Heart left ventricle (tissue), 16 donors: ENCODE measurements at regions of chr6 and their contacts with region 1.

Region 1: GRCh38 chr6:163965426-163966348 is 551.2 kb downstream of the QKI start:
- DNase-seq: peak in 3 of 5 donors; percentile 59 to 74 (median 61)
- ATAC-seq: peak; percentile 47 to 66 (median 54)
- H3K4me3 ChIP-seq: no peak overlapping the region
- H3K27ac ChIP-seq: peak overlapping the region; percentile 77 to 98 (median 90)
- H3K4me1 ChIP-seq: peaks cover 0 to 50% (median 17%) of the 10 kb centered on the region in 12 donors
- H3K27me3 ChIP-seq: no peaks in the 10 kb centered on the region
- CTCF ChIP-seq: no peak
- POLR2A ChIP-seq: no peak

Region 2: DNA sequence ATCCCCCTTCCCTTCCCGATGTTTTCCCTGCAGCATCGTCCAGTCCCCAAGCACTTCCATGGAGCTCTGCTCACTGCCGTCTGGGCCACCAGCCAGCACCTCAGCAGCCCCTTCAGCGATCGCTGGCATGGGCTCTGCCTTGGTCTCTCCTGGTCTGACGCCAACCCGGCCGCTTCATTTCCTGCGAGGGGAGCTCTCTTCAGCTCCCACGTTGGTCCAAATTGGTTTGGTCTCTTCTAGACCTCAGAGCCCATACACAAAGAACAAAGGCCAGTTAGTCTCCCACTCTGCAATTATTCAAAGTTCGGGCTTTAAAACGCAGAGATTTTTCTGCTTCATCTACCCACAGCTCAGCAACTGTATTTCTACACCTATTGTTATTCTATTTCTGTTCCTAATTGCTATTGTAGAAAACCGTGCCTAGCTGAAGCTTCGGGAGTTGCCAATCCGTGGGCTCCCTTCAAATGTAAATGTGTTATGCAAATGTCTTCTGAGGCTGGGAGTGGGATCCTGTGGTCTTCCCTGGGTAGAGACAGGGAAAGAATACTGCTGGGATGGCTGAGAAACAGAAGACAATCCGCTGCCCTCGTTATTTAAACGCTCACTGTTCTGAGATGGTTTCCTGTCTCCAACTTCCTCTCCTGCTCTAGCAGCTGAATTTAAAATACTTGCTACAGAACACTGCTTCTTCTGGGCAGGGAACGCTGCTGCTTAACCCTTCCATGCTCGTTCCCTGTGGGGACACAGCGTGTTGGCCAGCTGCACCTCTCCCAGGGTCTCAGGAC is 705.4 kb before region 1 on chr6:
- intact Hi-C with region 1: loop called in 1 of 10 experiments (anchors 10 kb)
- DNase-seq: peak in 3 of 5 donors; percentile 47 to 73 (median 66)
- ATAC-seq: peak in 3 of 4 donors; percentile 33 to 54 (median 34)
- H3K4me3 ChIP-seq: peak overlapping the region in 9 of 12 donors; percentile 2 to 47 (median 39)
- H3K27ac ChIP-seq: peak overlapping the region; percentile 37 to 74 (median 63)
- H3K4me1 ChIP-seq: peaks cover 0 to 54% (median 18%) of the 10 kb centered on the region in 12 donors
- H3K27me3 ChIP-seq: no peaks in the 10 kb centered on the region
- CTCF ChIP-seq: no peak
- POLR2A ChIP-seq: no peak

Region 3: GRCh38 chr6:163419413-163420288 is 546.0 kb before region 1 on chr6:
- intact Hi-C with region 1: loop called in 1 of 10 experiments (anchors 5 kb)
- DNase-seq: no peak
- ATAC-seq: no peak
- H3K4me3 ChIP-seq: peak overlapping the region; percentile 1 to 95 (median 83)
- H3K27ac ChIP-seq: peak overlapping the region; percentile 81 to 100 (median 98)
- H3K4me1 ChIP-seq: peaks cover 13 to 78% (median 47%) of the 10 kb centered on the region in 12 donors
- H3K27me3 ChIP-seq: no peaks in the 10 kb centered on the region
- CTCF ChIP-seq: peak in 1 of 12 donors; percentile 10
- POLR2A ChIP-seq: no peak

Region 4: GRCh38 chr6:163745536-163746400 is 219.9 kb before region 1 on chr6:
- intact Hi-C with region 1: loop called in 1 of 10 experiments (anchors 5 kb)
- DNase-seq: peak in 4 of 5 donors; percentile 70 to 89 (median 84)
- ATAC-seq: peak; percentile 94 to 96 (median 95)
- H3K4me3 ChIP-seq: no peak overlapping the region
- H3K27ac ChIP-seq: peak overlapping the region; percentile 32 to 85 (median 78)
- H3K4me1 ChIP-seq: peaks cover 0 to 53% (median 19%) of the 10 kb centered on the region in 12 donors
- H3K27me3 ChIP-seq: no peaks in the 10 kb centered on the region
- CTCF ChIP-seq: no peak
- POLR2A ChIP-seq: no peak

Region 5: DNA sequence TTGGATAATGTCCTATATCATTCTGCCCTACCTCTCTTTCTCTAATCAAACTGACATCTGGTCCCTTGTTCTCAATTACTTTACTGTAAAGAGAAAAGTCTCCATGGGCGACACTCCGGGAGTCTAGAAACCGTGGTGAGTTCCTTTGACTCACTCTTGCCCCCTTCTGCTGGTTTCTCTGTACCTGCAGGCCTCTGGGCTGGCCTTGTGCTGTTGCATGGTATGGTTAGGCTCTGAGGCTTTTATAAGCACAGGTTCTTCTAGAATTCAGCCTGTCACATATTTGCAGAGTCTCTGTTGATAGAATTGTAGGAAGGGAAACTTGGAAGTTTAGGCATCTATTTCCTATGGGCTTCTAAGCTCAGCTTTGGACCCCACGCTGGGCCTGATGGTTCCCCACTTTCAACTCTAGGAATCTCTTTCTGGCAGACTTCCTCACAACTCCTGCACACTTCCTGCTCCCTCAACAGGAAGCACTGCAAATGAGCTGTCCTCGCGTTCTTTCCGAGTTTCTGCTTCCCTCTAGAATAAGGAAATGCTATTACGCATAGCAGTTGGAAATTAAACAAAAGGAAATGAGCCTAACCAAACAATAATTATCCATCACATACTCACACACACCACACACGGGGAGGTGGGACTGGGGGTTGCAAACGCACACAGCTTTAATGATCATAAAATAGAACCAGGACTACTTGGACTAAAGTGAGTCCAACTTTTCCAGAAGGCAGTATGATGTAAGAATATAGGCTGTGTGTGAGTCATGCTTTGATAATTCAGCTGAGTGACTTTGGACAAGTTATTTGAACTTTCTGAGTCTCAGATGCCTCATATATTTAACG is 132.1 kb after region 1 on chr6:
- intact Hi-C with region 1: loop called in 5 of 10 experiments (anchors 1 to 5 kb)
- DNase-seq: peak in 3 of 5 donors; percentile 54 to 68 (median 59)
- ATAC-seq: peak; percentile 39 to 78 (median 52)
- H3K4me3 ChIP-seq: no peak overlapping the region
- H3K27ac ChIP-seq: peak overlapping the region; percentile 18 to 91 (median 84)
- H3K4me1 ChIP-seq: peaks cover 3 to 45% (median 30%) of the 10 kb centered on the region in 12 donors
- H3K27me3 ChIP-seq: no peaks in the 10 kb centered on the region
- CTCF ChIP-seq: peak; percentile 20 to 63 (median 46)
- POLR2A ChIP-seq: no peak

Region 6: GRCh38 chr6:164159061-164159460 is 193.4 kb after region 1 on chr6:
- intact Hi-C with region 1: loop called in 1 of 10 experiments (anchors 5 kb)
- DNase-seq: no peak
- ATAC-seq: no peak
- H3K4me3 ChIP-seq: no peak overlapping the region
- H3K27ac ChIP-seq: no peak overlapping the region
- H3K4me1 ChIP-seq: peaks cover 0 to 4% (median 0%) of the 10 kb centered on the region in 12 donors
- H3K27me3 ChIP-seq: no peaks in the 10 kb centered on the region
- CTCF ChIP-seq: no peak
- POLR2A ChIP-seq: no peak